ENCODE measurements at regions of chr22 and their contacts with region 1.

Region 1: DNA sequence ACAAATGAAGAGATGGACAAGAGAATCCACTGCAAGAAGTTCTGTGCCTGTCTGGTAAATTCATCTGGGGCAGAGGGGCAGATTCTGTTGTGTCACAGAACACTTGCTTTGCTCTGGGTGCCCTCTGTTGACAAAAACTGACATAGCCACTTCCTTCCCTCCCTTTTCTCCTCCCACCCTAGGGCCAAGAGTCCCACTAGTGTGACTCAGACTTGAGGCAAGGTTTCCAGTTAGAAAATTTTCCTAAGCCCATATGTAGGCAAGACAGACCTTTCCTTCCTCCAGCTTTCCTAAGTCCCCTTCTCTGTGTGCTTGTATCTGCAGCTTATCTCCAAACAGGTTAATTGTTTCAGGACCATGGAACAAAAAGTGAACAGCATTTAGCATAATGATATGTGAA is 106.8 kb downstream of the RBFOX2 start:
- DNase-seq: no peak

Region 2: DNA sequence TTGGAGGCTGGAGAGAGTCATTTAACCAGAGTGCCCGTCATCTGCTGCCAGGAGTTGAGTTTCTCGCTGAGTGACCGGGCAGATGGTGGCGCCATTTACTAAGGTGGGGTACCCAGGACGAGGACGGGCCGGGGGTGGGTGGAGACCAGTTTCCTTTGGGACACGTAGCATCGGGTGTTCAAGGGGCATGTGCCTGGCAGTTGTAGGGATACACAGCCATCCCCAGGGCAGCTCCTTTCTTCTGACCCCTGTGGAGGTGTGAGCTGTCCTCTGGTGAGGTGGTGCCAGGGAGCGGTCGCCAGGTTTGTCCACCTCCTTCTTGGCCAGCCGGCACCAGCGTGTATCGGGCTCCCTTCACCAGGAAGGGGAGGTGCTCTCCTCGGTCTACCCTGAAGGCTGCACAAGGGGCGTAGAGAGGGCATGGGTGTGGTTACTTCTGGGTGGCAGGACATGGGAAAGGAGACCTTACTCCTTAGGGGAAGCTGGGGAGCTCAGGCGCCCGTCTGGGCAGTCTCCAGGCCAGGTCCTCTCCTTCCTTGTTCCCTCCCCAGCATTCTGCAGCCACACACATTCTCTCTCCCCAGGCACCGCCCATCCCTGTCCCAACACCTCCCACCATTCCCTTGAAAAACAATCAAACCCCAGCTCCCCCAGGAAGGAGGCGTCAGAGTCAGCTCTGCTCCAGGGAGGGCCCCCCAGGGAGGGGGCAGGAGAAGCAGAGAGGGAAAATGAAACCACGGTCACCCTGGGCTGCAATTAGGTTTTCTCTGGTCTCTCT is 294.3 kb before region 1 on chr22:
- intact Hi-C with region 1: loop called in 1 of 2 experiments (anchors 5 kb)
- DNase-seq: peak; percentile 91

Region 3: DNA sequence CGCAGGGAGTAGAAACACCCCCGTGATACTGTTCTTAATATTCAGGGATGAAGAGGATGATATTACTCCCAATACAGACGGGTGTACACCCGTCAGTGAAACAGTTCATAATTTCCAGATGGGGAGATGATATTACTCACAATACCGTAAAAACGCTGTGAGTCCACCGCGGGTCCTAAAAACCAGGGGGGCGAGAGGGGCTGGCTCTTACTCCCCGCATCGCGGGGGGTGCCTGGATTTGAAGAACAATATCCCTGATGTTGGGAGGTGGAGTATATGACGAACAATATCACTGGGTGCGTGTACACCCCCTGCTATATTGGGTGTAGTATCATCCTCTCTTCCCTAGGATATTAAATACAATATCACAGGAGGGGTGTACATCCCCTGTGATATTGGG is 224.6 kb before region 1 on chr22:
- intact Hi-C with region 1: no loop called
- DNase-seq: no peak

Region 4: GRCh38 chr22:35883031-35883620 is 38.7 kb before region 1 on chr22:
- intact Hi-C with region 1: no loop called
- DNase-seq: no peak

Region 5: DNA sequence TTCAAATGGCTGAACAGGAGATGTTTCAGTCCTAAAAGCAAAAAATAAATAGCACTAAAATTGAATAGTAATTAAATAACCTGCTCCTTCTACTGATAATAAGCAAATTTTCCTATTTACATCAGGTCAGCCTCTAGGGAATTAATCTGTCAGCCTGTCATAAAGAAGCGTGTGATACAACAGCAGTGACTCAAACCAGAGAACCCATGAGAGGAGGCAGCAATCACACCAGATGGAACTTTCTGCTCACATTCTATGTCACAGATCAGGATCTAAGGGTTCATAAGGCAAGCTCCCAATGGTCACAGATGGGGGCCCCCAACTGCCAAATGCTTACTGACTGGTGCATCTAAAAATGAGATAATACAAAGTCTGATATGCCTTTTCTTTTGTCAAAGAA is 65.7 kb after region 1 on chr22:
- intact Hi-C with region 1: no loop called
- DNase-seq: no peak

Region 6: DNA sequence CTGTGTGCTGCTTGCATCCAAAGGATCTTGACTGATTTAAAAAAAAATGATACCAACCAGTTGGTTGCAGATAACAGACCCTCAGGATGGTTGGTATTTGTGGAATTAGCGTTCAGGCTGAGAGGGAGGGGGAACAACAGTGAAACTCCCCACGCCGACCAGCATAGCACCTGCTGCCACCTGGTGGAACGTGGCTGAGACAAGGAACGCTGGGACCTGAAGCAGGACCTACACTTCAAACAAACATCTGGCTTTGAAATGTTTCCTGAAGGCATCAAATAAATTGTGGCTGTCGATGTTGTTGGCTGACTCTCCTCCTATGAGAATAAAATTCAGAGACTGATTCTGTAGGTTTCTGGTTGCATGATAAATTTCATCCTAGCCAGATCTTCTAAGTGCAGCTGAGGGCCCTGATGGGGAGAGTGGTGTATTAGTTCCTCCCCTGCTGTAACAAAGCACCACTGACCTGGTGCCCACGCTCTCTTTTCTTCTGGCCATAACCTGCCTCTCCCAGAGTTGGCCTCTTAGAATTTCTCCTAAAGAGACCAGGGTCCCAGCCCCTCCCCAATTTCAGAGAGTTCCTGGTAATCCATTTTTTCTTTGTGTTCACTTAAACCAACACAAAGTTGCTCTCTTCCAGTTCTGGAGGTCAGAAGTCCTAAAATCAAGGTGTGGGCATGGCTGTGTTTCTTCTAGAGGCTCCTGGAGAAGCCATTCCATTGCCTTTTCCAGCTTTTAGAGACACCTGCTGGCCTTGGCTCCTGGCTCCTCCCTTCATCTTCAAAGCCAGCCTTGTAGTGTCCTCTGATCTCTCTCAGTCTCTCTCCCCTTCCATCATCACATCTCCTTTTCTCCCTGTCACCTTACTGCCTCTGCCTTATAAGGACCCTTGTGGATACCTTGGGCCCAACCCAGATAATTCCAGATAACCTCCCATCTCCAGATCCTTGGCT is 300.3 kb after region 1 on chr22:
- intact Hi-C with region 1: no loop called
- DNase-seq: no peak